ENCODE measurements at regions of chr2 and their contacts with region 1.

Region 1: DNA sequence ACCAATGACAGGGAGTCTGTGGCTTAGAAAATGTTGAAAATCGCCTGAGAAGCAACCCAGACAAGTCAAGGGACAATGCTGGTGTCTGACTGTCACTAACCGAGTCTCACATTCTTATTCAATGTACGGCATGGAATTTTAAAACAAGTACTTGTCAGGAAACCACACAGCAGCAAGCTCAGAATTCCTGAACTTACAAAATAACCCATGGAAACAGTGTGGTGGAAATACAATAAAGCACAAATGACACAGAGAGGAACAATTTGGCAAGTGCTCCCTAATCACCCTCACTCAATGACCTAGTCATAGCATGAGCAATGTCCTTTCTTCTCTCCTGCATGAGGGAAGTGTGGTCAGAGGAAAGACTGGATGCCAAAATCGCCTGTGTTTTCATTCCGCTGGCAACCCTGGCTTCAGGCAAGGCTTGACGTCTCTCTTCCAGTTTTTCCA is 154.0 kb downstream of the SATB2 start:
- DNase-seq: peak; percentile 95
- ATAC-seq: peak; percentile 98
- H3K4me3 ChIP-seq: no peak overlapping the region; the same call in 1 of the 2 replicates
- H3K27ac ChIP-seq: peak overlapping the region; percentile 54
- H3K4me1 ChIP-seq: peaks cover 17% of the 10 kb centered on the region
- H3K27me3 ChIP-seq: no peaks in the 10 kb centered on the region
- CTCF ChIP-seq: no peak

Region 2: GRCh38 chr2:199339891-199340605 is 36.3 kb after region 1 on chr2:
- CTCF ChIA-PET with region 1: no interaction called
- POLR2A ChIA-PET with region 1: no interaction called
- intact Hi-C with region 1: loop called (anchors 1 kb)
- DNase-seq: peak; percentile 72
- ATAC-seq: peak; percentile 93
- H3K4me3 ChIP-seq: no peak overlapping the region
- H3K27ac ChIP-seq: peak overlapping the region; percentile 66
- H3K4me1 ChIP-seq: peaks cover 17% of the 10 kb centered on the region
- H3K27me3 ChIP-seq: no peaks in the 10 kb centered on the region
- CTCF ChIP-seq: no peak

Region 3: DNA sequence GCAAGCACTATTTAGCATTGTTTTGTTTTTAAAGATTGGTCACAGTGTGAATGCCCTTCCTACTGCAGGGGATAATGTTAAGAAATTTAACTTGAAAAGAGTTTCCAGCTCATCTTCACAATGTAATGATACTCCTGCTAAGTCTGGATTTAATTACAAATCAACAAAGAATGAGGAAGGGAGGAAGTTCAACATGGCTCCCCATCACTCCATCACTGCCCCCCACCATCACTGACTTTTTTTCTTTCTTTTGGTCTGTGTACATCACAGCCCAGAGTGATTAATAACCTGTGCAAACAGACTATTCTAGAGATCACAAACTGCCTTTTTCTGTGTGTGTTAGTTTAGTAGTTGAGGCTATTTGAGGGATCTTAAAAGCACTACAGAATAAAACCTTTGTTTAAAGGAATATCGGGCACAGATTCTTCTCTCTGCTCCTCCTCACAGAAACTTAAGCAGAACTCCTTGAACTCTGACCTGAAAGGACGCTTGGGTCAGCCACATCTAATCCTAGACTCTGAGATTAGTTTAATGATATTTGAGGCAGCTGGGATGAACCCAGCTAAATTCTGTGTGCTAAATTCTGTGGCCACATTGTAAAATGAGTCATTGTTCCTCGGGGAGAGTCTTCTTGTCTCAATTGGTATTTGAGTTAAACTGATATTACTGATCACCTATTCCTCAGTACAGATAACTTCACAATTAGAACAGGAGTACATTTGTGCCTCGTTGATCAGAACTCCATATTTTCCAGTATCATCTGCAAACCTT is 106.2 kb after region 1 on chr2:
- CTCF ChIA-PET with region 1: no interaction called
- POLR2A ChIA-PET with region 1: no interaction called
- intact Hi-C with region 1: loop called (anchors 1 kb)
- DNase-seq: peak; percentile 65
- ATAC-seq: peak; percentile 78
- H3K4me3 ChIP-seq: no peak overlapping the region
- H3K27ac ChIP-seq: no peak overlapping the region
- H3K4me1 ChIP-seq: peaks cover 12% of the 10 kb centered on the region
- H3K27me3 ChIP-seq: no peaks in the 10 kb centered on the region
- CTCF ChIP-seq: no peak

Region 4: GRCh38 chr2:199459286-199460016 is 155.7 kb after region 1 on chr2:
- CTCF ChIA-PET with region 1: no interaction called
- POLR2A ChIA-PET with region 1: no interaction called
- intact Hi-C with region 1: loop called (anchors 1 kb)
- DNase-seq: peak; percentile 88
- ATAC-seq: peak; percentile 43
- H3K4me3 ChIP-seq: peak overlapping the region; percentile 79
- H3K27ac ChIP-seq: peak overlapping the region; percentile 75
- H3K4me1 ChIP-seq: peaks cover 14% of the 10 kb centered on the region
- H3K27me3 ChIP-seq: no peaks in the 10 kb centered on the region
- CTCF ChIP-seq: no peak

Measured in PC-3 (cell line).